ENCODE measurements at regions of chr5 and their contacts with region 1.

Region 1: DNA sequence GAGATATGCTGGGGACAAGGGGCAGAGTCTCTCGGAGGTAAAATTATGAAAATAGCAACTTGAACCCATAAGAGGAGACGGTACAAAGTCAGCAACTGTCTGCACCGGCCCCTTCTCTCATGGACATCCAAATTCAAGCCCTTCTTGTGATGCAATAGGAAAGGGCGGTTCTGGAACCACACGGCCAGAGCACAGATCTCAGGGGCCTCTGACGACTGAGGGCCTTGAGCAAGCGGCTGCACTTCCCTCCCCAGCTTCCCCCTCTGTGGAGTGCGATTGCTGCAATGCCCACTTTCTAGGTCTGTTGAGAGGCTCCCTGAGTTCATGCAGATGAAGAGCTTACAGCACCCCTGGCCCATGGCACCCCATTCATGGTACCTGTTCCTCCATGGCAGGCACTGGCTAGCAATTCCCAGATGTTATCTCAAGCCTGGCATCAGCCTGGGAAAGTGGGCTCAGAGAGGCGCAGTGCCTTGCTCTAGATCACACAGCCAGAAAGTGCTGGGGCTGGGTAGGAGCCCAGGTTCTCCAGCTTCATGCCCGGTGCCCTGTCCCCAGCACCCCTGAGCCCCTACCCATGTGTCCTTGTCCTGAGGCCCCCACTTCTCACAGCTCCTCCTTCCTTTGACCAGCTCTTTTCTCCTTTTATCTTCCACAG is 17.7 kb upstream of the CPLX2 start:
- DNase-seq: no peak
- ATAC-seq: no peak
- H3K4me3 ChIP-seq: no peak overlapping the region
- H3K27ac ChIP-seq: no peak overlapping the region
- H3K4me1 ChIP-seq: peaks cover 6 to 9% of the 10 kb centered on the region in 2 experiments; a peak in 3 of 4 replicates
- H3K27me3 ChIP-seq: no peaks in the 10 kb centered on the region
- CTCF ChIP-seq: no peak
- POLR2A ChIP-seq: no peak
- RAD21 ChIP-seq: no peak

Region 2: GRCh38 chr5:175837171-175837699 is 16.5 kb before region 1 on chr5:
- CTCF ChIA-PET with region 1: no interaction called
- POLR2A ChIA-PET with region 1: no interaction called
- RAD21 ChIA-PET with region 1: no interaction called
- intact Hi-C with region 1: no loop called
- DNase-seq: no peak
- ATAC-seq: no peak
- H3K4me3 ChIP-seq: no peak overlapping the region
- H3K27ac ChIP-seq: no peak overlapping the region
- H3K4me1 ChIP-seq: peaks cover 0 to 36% of the 10 kb centered on the region in 2 experiments; a peak in 3 of 4 replicates
- H3K27me3 ChIP-seq: no peaks in the 10 kb centered on the region
- CTCF ChIP-seq: no peak
- POLR2A ChIP-seq: no peak
- RAD21 ChIP-seq: no peak

Region 3: DNA sequence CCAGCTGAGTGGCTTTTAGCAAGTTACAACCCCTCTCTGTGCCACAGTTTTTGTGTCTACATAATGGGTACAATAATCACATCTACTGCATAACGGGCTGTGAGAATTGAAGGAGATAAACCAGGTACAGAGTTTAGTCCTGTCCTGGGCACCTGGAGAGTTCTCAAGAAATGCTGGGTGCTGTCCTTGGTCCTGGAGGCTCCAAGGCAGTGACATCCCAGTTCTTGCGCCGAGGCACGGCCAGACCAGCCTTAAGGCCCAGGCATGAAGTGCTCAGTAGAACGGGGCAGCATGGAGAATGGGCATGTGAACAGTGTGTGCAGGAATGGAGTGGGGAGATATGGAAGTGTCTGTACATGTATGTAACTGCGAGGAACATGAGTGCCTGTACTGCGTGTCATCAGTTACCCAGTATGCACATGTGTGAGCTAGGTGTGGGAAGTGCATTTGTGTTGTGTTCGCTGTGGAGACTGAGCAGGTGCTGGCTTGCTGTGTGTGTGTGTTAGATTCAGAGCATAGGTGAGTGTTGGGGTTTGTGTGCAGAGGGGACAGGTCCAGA is 950.3 kb after region 1 on chr5:
- CTCF ChIA-PET with region 1: no interaction called
- POLR2A ChIA-PET with region 1: no interaction called
- RAD21 ChIA-PET with region 1: no interaction called
- intact Hi-C with region 1: loop called (anchors 10 kb)
- DNase-seq: no peak
- ATAC-seq: no peak
- H3K4me3 ChIP-seq: no peak overlapping the region
- H3K27ac ChIP-seq: no peak overlapping the region
- H3K4me1 ChIP-seq: no peaks in the 10 kb centered on the region
- H3K27me3 ChIP-seq: peaks cover 38% of the 10 kb centered on the region; the same call in 1 of the 2 replicates
- CTCF ChIP-seq: no peak
- POLR2A ChIP-seq: no peak
- RAD21 ChIP-seq: no peak

Region 4: GRCh38 chr5:176934309-176934930 is 1080.7 kb after region 1 on chr5:
- CTCF ChIA-PET with region 1: no interaction called
- POLR2A ChIA-PET with region 1: no interaction called
- RAD21 ChIA-PET with region 1: no interaction called
- intact Hi-C with region 1: no loop called
- DNase-seq: no peak
- ATAC-seq: no peak
- H3K4me3 ChIP-seq: no peak overlapping the region
- H3K27ac ChIP-seq: no peak overlapping the region
- H3K4me1 ChIP-seq: no peaks in the 10 kb centered on the region
- H3K27me3 ChIP-seq: no peaks in the 10 kb centered on the region
- CTCF ChIP-seq: no peak
- POLR2A ChIP-seq: no peak
- RAD21 ChIP-seq: no peak

Measured in HCT116 (cell line).